PC-9 (cell line): ENCODE measurements at regions of chr4 and their contacts with region 1.

Region 1: DNA sequence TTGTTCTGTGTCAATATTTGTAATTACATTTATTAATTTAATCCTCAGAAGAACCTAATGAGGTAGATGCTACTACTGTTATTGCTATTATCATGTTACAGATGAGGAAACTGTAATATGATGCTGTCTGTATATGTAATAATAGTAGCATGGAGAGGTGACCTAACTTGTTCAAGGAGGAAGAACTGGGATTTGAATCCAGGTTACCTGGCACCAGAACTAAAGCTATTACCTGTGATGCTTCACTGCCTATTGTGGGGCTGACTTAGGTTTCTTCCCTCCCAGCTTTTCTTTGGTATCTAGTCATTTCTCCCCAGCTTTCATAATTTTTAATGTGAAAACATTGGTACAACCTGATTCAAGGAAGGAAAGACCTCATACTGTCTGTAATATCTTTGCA is 43.6 kb downstream of the RAPGEF2 start:
- DNase-seq: no peak
- H3K4me3 ChIP-seq: no peak overlapping the region
- H3K27ac ChIP-seq: no peak overlapping the region
- H3K4me1 ChIP-seq: peaks cover 13% of the 10 kb centered on the region
- H3K27me3 ChIP-seq: no peaks in the 10 kb centered on the region
- CTCF ChIP-seq: no peak

Region 2: GRCh38 chr4:159027535-159027934 is 119.0 kb before region 1 on chr4:
- CTCF ChIA-PET with region 1: no interaction called
- POLR2A ChIA-PET with region 1: interaction called, 10 read pairs
- intact Hi-C with region 1: no loop called
- DNase-seq: no peak
- H3K4me3 ChIP-seq: no peak overlapping the region
- H3K27ac ChIP-seq: no peak overlapping the region
- H3K4me1 ChIP-seq: no peaks in the 10 kb centered on the region
- H3K27me3 ChIP-seq: no peaks in the 10 kb centered on the region
- CTCF ChIP-seq: no peak

Region 3: DNA sequence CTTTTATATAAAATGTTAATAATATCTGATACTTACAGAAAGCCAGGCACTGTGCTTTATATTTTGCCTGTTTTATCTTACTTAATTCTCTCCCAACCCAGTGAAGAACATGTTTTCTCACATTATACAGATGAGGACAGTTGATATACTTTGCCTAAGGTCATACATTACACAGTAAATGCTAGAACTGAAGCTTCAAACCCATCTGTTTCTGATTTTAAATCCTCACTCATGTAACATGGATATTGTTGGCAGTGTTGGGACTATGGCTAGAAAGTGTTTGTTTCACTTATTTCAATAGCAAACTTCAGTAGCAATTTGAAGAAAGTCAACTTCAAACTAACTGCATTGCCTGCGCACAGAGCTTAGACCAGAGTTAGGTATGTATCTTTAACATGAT is 13.8 kb after region 1 on chr4:
- CTCF ChIA-PET with region 1: no interaction called
- POLR2A ChIA-PET with region 1: no interaction called
- intact Hi-C with region 1: no loop called
- DNase-seq: no peak
- H3K4me3 ChIP-seq: no peak overlapping the region
- H3K27ac ChIP-seq: no peak overlapping the region
- H3K4me1 ChIP-seq: no peaks in the 10 kb centered on the region
- H3K27me3 ChIP-seq: no peaks in the 10 kb centered on the region
- CTCF ChIP-seq: no peak

Region 4: GRCh38 chr4:159655547-159655946 is 509.1 kb after region 1 on chr4:
- CTCF ChIA-PET with region 1: no interaction called
- POLR2A ChIA-PET with region 1: no interaction called
- intact Hi-C with region 1: no loop called
- DNase-seq: peak in 1 of 2 experiments; percentile 56
- H3K4me3 ChIP-seq: no peak overlapping the region
- H3K27ac ChIP-seq: no peak overlapping the region
- H3K4me1 ChIP-seq: no peaks in the 10 kb centered on the region
- H3K27me3 ChIP-seq: no peaks in the 10 kb centered on the region
- CTCF ChIP-seq: no peak